HEK293 (cell line): ENCODE measurements at regions of chr1 and their contacts with region 1.

Region 1: GRCh38 chr1:45303582-45304310 is 22.9 kb upstream of the HPDL start:
- H3K4me3 ChIP-seq: peak overlapping the region; percentile 78
- H3K27ac ChIP-seq: peak overlapping the region; percentile 70
- H3K4me1 ChIP-seq: peaks cover 5% of the 10 kb centered on the region; the same call in 1 of the 2 replicates
- CTCF ChIP-seq: peak; percentile 100

Region 2: DNA sequence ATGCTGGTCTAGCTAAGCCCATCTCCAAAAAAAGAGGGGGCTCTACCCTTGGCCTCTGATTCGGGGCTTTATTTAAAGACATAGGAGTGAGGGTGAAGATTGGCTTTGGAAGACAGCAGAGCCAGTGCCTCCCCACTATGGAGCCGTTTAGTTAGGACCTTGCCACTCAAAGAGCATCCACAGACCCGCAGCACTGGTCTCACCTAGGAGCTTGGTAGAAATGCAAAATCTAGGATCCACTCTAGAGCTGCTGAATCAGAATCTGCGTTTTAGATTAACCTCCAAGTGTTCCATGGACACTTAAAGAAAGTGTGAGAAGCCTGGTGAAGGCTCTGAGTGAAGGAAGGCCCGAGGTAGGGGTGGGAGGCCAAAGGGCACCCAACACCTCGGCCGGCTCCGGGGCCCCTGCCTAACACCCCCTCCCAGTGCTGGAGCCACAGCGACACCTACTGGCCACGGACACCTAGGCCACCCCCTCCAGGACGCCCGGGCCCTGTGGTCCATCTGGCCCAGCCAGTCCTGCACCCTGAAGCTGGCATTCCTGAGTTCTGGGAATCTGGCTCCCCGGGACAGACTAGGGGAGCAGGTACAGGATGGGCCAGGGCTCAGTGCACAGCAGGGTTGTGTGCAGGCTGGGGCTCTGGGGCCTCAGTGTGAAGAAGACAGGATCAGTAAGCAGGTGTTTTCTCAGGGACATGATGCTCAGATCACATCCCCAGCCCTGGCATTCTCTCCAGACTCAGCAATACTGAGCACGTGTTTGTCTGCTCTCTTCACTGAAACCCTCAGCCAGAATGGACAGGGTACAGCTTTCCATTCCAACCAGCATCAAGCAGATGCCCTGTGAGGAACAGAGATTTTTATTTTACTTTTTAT is 708.6 kb before region 1 on chr1:
- CTCF ChIA-PET with region 1: no interaction called
- POLR2A ChIA-PET with region 1: no interaction called
- H3K4me3 ChIP-seq: no peak overlapping the region
- H3K27ac ChIP-seq: no peak overlapping the region
- H3K4me1 ChIP-seq: no peaks in the 10 kb centered on the region
- CTCF ChIP-seq: peak; percentile 87

Region 3: DNA sequence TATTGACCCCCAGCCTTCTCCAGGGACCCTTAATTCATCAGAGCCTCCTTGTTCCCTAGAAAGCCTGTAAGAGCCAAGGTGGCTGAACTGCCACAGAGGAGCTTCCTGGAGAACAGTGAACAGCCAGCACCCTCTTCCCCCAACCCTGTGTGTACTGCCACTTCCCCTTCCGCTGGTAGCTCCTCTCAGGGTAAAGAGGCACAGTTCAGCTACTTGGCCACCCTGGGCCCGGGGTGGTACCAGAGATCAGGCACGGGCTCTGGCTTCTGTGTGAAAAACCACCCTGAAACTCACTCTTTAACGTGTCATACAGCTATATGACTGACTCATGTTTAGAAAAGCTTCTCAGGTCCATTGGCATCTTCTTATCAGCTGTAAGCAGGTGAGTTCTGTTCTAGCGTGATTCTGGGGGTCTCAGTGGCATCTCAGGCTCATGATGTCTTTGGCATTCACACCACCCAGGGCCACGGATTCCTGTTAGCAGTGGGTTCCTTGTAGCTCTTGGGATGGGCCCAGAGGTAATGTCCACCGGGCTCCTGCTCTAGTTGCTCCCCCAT is 606.9 kb before region 1 on chr1:
- CTCF ChIA-PET with region 1: no interaction called
- POLR2A ChIA-PET with region 1: interaction called, 10 read pairs
- H3K4me3 ChIP-seq: no peak overlapping the region
- H3K27ac ChIP-seq: no peak overlapping the region
- H3K4me1 ChIP-seq: 0 out of 2 replicates have a peak, but pooled peaks cover 2% of the 10 kb centered on the region
- CTCF ChIP-seq: no peak

Region 4: GRCh38 chr1:44730741-44731512 is 572.8 kb before region 1 on chr1 and contains the start of gene RNU5D-1:
- CTCF ChIA-PET with region 1: interaction called, 3 read pairs
- POLR2A ChIA-PET with region 1: interaction called, 13 read pairs
- H3K4me3 ChIP-seq: no peak within 1 kb of the TSS; the same call in 1 of the 2 replicates
- H3K27ac ChIP-seq: peak within 1 kb of the TSS; percentile 94
- H3K4me1 ChIP-seq: no peaks in the 10 kb centered on the region
- CTCF ChIP-seq: peak; percentile 72; the same call in 1 of the 2 replicates

Region 5: DNA sequence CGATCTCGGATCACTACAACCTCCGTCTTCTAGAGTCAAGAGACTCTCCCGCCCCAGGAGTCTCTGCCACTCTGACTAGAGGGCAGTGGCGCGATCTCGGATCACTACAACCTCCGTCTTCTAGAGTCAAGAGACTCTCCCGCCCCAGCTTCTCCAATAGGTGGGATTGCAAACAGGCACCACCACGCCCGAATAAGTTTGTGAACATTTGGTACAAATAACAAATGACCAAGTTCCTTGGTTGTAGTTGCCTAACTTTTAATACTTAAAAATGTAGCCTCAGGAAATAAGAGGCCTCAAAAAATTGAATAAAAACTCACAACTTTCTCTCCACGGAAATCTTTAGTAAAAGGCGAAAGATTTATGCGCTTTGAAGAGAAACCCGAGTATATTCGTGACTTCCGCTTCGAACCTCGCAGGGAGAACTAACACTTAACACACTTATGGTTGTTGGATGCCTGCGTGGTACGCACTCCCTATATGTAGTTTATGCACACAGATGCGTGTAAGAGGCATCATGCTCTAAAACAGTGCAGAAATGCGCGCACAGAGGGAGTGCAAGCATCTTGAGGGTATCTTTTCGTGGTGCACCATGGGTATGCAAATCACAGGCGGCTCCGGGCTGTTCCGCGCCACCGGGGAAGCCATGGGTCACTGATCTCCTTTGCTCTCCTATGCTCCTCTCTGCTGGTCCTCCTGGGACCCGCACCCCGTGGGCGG is 484.0 kb before region 1 on chr1:
- CTCF ChIA-PET with region 1: interaction called, 7 read pairs
- POLR2A ChIA-PET with region 1: interaction called, 11 read pairs
- H3K4me3 ChIP-seq: peak overlapping the region; percentile 31
- H3K27ac ChIP-seq: peak overlapping the region; percentile 91
- H3K4me1 ChIP-seq: no peaks in the 10 kb centered on the region
- CTCF ChIP-seq: no peak

Region 6: DNA sequence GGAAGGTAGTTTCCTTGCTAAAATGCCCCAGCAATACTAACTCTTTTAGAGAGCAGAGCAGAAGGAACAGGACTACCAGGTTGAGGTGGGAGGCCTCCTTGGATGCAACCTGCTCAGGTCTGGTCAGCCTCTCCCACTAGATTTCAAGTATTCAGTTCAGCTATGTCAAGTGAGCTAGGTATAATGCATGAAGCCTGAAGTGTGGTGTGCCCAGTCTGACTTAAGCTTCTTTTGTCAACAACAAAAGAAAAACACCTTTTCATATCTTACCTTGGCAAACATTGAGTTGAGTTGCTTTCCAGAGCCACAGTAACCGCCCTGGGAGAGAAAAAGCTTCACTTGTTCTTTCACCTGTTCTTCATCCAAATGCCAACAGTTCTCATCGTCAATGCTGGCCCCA is 243.9 kb before region 1 on chr1:
- CTCF ChIA-PET with region 1: no interaction called
- POLR2A ChIA-PET with region 1: no interaction called
- H3K4me3 ChIP-seq: no peak overlapping the region
- H3K27ac ChIP-seq: no peak overlapping the region
- H3K4me1 ChIP-seq: no peaks in the 10 kb centered on the region
- CTCF ChIP-seq: no peak

Region 7: DNA sequence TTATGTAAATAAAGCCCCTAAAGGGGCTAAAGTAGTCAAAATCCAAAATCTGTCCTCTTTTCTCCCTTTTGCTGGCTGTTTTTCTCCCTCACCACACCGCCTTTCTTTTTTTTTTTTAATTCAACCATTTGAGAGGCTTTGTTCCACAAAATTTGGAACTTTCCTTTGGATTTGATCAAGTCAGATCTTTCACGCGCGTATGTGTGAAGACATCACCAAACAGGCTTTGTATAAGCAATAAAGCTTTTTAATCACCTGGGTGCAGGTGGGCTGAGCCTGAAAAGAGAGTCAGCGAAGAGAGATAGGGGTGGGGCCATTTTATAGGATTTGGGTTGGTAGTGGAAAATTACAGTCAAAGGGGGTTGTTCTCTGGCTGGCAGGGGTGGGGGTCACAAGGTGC is 17.7 kb after region 1 on chr1:
- CTCF ChIA-PET with region 1: interaction called, 5 read pairs
- POLR2A ChIA-PET with region 1: interaction called, 11 read pairs
- H3K4me3 ChIP-seq: no peak overlapping the region
- H3K27ac ChIP-seq: no peak overlapping the region
- H3K4me1 ChIP-seq: no peaks in the 10 kb centered on the region
- CTCF ChIP-seq: no peak

Region 8: GRCh38 chr1:45348716-45349677 is 45.3 kb after region 1 on chr1:
- CTCF ChIA-PET with region 1: no interaction called
- POLR2A ChIA-PET with region 1: interaction called, 11 read pairs
- H3K4me3 ChIP-seq: no peak overlapping the region
- H3K27ac ChIP-seq: no peak overlapping the region
- H3K4me1 ChIP-seq: no peaks in the 10 kb centered on the region
- CTCF ChIP-seq: no peak

Region 9: DNA sequence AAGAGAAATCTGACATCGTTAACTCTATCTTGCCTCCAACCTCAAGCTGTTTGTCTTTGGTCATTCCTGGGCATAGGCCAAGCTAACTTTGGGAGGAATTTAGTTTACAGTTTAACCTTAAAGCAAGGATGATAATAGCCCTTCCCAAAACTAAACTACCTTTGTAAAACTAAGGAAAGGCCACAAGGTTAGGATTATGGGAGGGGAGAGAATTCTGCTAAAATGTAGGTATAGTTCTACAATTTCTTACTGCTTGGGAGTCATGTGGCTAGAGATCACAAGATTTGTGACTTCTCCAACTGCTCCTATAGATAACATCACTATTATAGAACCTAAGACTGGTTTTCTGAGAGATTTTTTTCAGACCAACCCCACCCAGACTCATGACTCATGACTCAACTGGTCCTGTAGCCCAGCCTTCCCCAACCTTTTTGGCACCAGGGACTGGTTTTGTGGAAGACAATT is 107.1 kb after region 1 on chr1:
- CTCF ChIA-PET with region 1: no interaction called
- POLR2A ChIA-PET with region 1: no interaction called
- H3K4me3 ChIP-seq: no peak overlapping the region
- H3K27ac ChIP-seq: no peak overlapping the region
- H3K4me1 ChIP-seq: no peaks in the 10 kb centered on the region
- CTCF ChIP-seq: no peak

Region 10: DNA sequence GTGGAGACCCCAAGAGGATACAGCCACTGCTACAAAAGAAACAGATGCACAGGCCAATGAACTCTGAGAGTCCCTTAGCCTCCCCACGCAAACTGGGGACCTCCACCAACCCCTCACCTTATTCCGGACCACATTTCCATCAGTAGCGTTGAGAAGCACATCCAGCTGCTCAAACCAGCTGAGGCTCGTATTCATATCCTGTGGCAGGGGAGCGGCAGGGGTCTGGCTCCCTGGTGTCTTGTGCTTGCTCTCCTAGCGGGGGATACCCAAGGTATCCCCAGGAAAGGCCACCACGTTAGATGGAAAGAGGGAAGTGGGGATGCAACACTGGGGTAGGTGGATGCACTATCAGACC is 195.6 kb after region 1 on chr1:
- CTCF ChIA-PET with region 1: interaction called, 3 read pairs
- POLR2A ChIA-PET with region 1: interaction called, 19 read pairs
- H3K4me3 ChIP-seq: peak overlapping the region; percentile 56
- H3K27ac ChIP-seq: no peak overlapping the region; the same call in 1 of the 2 replicates
- H3K4me1 ChIP-seq: no peaks in the 10 kb centered on the region
- CTCF ChIP-seq: no peak